Dorsolateral prefrontal cortex (tissue), 120 donors: ENCODE measurements at regions of chr3 and their contacts with region 1.

Region 1: GRCh38 chr3:68943753-68944500 is 11.6 kb upstream of the TAFA4 start:
- DNase-seq: no peak
- H3K4me3 ChIP-seq: no peak overlapping the region
- H3K27ac ChIP-seq: no peak overlapping the region
- H3K27me3 ChIP-seq: peaks cover 0 to 14% (median 0%) of the 10 kb centered on the region in 45 donors
- CTCF ChIP-seq: no peak

Region 2: GRCh38 chr3:68703066-68703465 is 240.9 kb before region 1 on chr3:
- intact Hi-C with region 1: no loop called
- DNase-seq: no peak
- H3K4me3 ChIP-seq: no peak overlapping the region
- H3K27ac ChIP-seq: no peak overlapping the region
- H3K27me3 ChIP-seq: peaks cover 0 to 4% (median 0%) of the 10 kb centered on the region in 45 donors
- CTCF ChIP-seq: no peak

Region 3: DNA sequence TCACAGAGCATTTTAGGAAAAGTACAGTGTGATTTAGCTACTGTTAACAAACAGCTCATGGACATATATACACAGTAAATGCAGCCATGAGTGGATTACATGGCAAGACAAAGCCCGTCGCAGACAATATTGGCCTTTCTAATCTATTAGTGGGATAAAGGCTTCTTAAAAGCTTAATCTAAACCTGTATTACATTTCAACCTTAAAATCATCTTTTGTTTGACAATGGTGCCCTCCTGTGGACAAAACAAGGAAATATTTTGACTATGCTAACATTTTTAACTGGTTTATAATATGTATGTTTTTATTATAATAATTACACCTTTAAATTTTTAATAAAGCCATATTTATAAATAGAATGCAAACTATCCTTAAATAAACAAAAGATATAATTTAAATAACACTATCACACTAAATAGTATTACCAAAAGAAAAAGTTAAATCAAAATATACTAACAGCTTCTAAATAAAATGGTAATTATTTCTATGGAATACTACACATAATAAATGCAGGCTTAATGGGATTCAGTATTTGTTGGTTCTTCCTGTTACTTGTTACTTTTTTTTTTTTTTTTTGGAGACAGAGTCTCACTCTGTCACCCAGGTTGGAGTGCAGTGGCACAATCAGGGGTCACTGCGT is 50.2 kb before region 1 on chr3:
- intact Hi-C with region 1: no loop called
- DNase-seq: no peak
- H3K4me3 ChIP-seq: no peak overlapping the region
- H3K27ac ChIP-seq: no peak overlapping the region
- H3K27me3 ChIP-seq: no peaks in the 10 kb centered on the region
- CTCF ChIP-seq: peak; percentile 36 to 82 (median 66)

Region 4: GRCh38 chr3:68931406-68932149 is 12.3 kb before region 1 on chr3:
- intact Hi-C with region 1: no loop called
- DNase-seq: no peak
- H3K4me3 ChIP-seq: peak overlapping the region; percentile 29 to 81 (median 64)
- H3K27ac ChIP-seq: peak overlapping the region in 24 of 59 donors; percentile 7 to 84 (median 55)
- H3K27me3 ChIP-seq: peaks cover 0 to 47% (median 20%) of the 10 kb centered on the region in 45 donors
- CTCF ChIP-seq: no peak

Region 5: DNA sequence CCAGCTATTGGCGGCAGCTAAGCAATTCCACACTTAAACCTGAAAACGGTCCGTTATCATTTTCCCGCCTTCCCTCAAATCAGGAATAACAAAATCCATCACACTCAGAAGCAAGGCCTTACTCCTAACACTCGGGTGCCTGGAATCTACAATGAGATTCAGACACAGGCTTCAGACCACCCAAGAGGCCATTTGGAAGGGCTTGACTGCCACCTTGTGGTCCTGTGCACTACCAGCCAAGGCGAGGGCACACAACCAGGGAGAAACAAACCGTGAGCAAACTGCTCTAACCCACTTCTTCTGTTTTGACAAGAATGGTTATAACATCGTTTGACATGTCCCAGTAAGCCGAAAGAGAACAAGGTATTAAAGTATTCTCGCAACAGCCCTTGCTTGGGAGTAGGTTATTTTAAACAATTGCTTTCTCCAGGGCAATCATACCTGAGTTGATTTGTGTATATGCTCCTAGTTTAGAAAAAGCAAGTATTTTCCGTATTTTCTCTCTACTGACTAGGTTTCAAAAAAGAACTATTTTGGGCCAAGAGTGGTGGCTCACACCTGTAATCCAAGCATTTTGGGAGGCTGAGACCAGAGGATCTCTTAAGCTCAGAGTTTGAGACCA is 28.5 kb after region 1 on chr3:
- intact Hi-C with region 1: loop called in 1 of 2 experiments (anchors 2 kb)
- DNase-seq: peak; percentile 45 to 82 (median 70)
- H3K4me3 ChIP-seq: no peak overlapping the region
- H3K27ac ChIP-seq: no peak overlapping the region
- H3K27me3 ChIP-seq: no peaks in the 10 kb centered on the region
- CTCF ChIP-seq: peak; percentile 50 to 97 (median 85)